CD8-positive, alpha-beta T cell (primary cell): ENCODE measurements at regions of chr10 and their contacts with region 1.

Region 1: GRCh38 chr10:74738985-74739567 is 87.3 kb upstream of the KAT6B start:
- DNase-seq: peak in 6 of 9 experiments; percentile 2 to 68 (median 44)
- ATAC-seq: peak; percentile 71
- H3K4me3 ChIP-seq: no peak overlapping the region
- H3K4me3 Mint-ChIP-seq: peak overlapping the region; percentile 56
- H3K27ac ChIP-seq: peak overlapping the region in 1 of 2 experiments; percentile 59
- H3K27ac Mint-ChIP-seq: peak overlapping the region; percentile 86
- H3K4me1 ChIP-seq: peaks cover 19% of the 10 kb centered on the region
- H3K4me1 Mint-ChIP-seq: peaks cover 26% of the 10 kb centered on the region
- H3K27me3 ChIP-seq: no peaks in the 10 kb centered on the region
- H3K27me3 Mint-ChIP-seq: no peaks in the 10 kb centered on the region
- CTCF ChIP-seq: peak; percentile 33

Region 2: DNA sequence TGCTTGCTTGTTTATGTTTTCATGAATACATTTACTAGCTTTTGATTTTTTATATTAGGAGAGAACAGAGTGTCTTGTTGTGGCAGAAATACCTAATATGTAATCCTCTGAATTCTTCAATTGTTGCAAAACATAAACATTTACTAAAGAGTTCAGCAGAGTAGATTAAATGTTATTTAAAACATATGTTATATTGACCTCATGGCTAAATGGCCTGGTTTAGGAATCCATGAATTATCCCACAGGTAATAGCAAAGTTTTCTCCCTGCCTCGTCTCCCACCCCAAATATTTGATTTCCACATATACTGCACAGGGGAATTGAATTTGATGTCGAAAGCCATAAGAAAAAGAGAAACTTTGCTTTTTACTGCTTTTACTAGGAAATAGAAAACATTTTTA is 476.2 kb before region 1 on chr10:
- CTCF ChIA-PET with region 1: no interaction called
- POLR2A ChIA-PET with region 1: no interaction called
- intact Hi-C with region 1: loop called (anchors 2 to 10 kb)
- DNase-seq: no peak
- ATAC-seq: no peak
- H3K4me3 ChIP-seq: no peak overlapping the region
- H3K4me3 Mint-ChIP-seq: no peak overlapping the region
- H3K27ac ChIP-seq: no peak overlapping the region
- H3K27ac Mint-ChIP-seq: peak overlapping the region; percentile 58
- H3K4me1 ChIP-seq: no peaks in the 10 kb centered on the region
- H3K4me1 Mint-ChIP-seq: peaks cover 7% of the 10 kb centered on the region
- H3K27me3 ChIP-seq: no peaks in the 10 kb centered on the region
- H3K27me3 Mint-ChIP-seq: no peaks in the 10 kb centered on the region
- CTCF ChIP-seq: no peak

Region 3: DNA sequence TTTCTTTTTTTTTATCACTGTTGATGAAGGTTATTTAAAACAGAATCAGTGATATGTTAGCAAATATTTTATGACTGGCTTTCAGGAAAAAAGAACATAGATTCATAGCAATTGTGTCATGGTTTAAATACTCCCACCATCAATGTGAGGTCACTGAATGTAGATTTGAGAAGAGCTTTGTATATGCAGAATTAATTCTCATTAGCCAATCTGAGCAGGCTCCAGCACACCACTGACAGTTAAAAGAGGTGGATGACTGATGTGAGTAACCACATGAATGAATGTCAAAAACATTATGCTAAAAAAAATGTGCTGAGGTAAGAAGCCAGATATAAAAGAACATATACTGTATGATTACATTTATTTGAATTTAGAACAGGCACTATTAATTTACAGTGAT is 87.5 kb before region 1 on chr10:
- CTCF ChIA-PET with region 1: no interaction called
- POLR2A ChIA-PET with region 1: no interaction called
- intact Hi-C with region 1: no loop called
- DNase-seq: peak in 3 of 9 experiments; percentile 11 to 41 (median 33)
- ATAC-seq: peak; percentile 83
- H3K4me3 ChIP-seq: no peak overlapping the region
- H3K4me3 Mint-ChIP-seq: no peak overlapping the region
- H3K27ac ChIP-seq: no peak overlapping the region
- H3K27ac Mint-ChIP-seq: no peak overlapping the region
- H3K4me1 ChIP-seq: peaks cover 3% of the 10 kb centered on the region
- H3K4me1 Mint-ChIP-seq: peaks cover 9% of the 10 kb centered on the region
- H3K27me3 ChIP-seq: no peaks in the 10 kb centered on the region
- H3K27me3 Mint-ChIP-seq: no peaks in the 10 kb centered on the region
- CTCF ChIP-seq: no peak

Region 4: DNA sequence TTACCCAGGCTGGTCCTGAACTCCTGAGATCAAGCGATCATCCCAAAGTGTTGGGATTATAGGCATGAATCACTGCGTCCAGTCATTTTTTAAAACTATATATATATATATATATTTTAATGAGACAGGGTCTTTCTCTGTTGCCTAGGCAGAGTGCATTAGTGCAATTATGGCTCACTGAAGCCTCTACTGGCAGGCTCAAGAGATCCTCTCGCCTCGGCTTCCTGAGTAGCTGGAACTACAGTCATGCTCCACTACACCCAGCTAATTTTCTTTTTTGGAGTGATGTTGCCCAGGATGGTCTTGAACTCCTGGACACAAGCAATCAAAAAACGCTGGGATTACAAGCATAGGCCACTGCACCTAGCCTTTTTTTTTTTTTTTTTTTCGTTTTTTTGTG is 32.0 kb after region 1 on chr10:
- CTCF ChIA-PET with region 1: no interaction called
- POLR2A ChIA-PET with region 1: no interaction called
- intact Hi-C with region 1: no loop called
- DNase-seq: no peak
- ATAC-seq: no peak
- H3K4me3 ChIP-seq: no peak overlapping the region
- H3K4me3 Mint-ChIP-seq: no peak overlapping the region
- H3K27ac ChIP-seq: no peak overlapping the region
- H3K27ac Mint-ChIP-seq: no peak overlapping the region
- H3K4me1 ChIP-seq: no peaks in the 10 kb centered on the region
- H3K4me1 Mint-ChIP-seq: no peaks in the 10 kb centered on the region
- H3K27me3 ChIP-seq: no peaks in the 10 kb centered on the region
- H3K27me3 Mint-ChIP-seq: no peaks in the 10 kb centered on the region
- CTCF ChIP-seq: no peak